CD4-positive, alpha-beta T cell (primary cell): ENCODE measurements at regions of chr1 and their contacts with region 1.

Region 1: DNA sequence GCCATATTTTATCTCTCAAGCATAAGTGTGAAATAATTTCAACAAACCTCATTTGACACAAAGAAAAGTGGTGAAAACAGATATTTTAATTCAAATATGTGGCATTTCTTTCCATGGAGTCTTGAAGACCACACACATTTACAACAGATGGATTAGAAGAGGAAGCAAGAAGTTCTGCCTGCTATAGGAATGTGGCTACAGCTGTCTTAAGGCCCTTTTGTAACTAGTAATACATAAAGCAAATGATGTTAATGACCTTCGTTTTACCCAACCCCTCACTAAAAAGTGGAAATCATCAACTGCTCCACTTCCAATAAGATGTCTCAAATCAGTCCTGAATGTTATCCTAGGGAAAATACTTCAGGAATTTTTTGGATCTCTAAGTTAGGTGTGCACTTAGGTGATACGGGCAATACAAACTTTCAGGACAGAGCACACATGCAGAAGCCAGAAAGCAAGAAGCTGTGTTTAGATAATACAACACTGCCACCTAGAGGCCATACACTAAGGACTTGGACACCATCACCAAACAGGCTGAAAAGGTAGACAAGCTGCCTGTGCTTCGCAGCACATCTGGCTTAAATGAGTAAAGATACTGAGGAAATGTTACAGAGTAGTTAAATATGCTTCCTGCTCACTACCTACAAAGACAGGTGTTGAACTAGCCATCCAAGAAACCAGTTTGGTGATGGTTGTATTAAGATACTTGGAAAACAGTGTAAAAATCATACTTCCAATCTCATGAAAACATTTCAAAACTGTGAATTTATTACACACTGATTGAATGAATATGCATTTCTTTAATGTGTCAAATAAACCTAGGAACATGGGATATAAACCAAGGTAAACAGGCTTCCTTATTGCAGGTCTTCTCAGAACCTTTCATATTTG is 24.4 kb downstream of the RRAGC start:
- DNase-seq: peak in 8 of 14 experiments; percentile 9 to 87 (median 46)
- ATAC-seq: peak; percentile 84
- H3K4me3 ChIP-seq: no peak overlapping the region
- H3K4me3 Mint-ChIP-seq: no peak overlapping the region
- H3K27ac ChIP-seq: no peak overlapping the region
- H3K27ac Mint-ChIP-seq: no peak overlapping the region
- H3K4me1 ChIP-seq: no peaks in the 10 kb centered on the region
- H3K4me1 Mint-ChIP-seq: peaks cover 7% of the 10 kb centered on the region
- H3K27me3 ChIP-seq: no peaks in the 10 kb centered on the region
- H3K27me3 Mint-ChIP-seq: peaks cover 8% of the 10 kb centered on the region
- CTCF ChIP-seq: peak; percentile 93

Region 2: GRCh38 chr1:37602750-37603694 is 1232.2 kb before region 1 on chr1:
- CTCF ChIA-PET with region 1: interaction called, 3 read pairs
- POLR2A ChIA-PET with region 1: no interaction called
- intact Hi-C with region 1: loop called (anchors 2 to 5 kb)
- DNase-seq: peak in 12 of 14 experiments; percentile 6 to 71 (median 26)
- ATAC-seq: peak; percentile 74
- H3K4me3 ChIP-seq: no peak overlapping the region
- H3K4me3 Mint-ChIP-seq: no peak overlapping the region
- H3K27ac ChIP-seq: no peak overlapping the region
- H3K27ac Mint-ChIP-seq: no peak overlapping the region
- H3K4me1 ChIP-seq: peaks cover 7% of the 10 kb centered on the region
- H3K4me1 Mint-ChIP-seq: no peaks in the 10 kb centered on the region
- H3K27me3 ChIP-seq: no peaks in the 10 kb centered on the region
- H3K27me3 Mint-ChIP-seq: peaks cover 11% of the 10 kb centered on the region
- CTCF ChIP-seq: peak; percentile 87

Region 3: DNA sequence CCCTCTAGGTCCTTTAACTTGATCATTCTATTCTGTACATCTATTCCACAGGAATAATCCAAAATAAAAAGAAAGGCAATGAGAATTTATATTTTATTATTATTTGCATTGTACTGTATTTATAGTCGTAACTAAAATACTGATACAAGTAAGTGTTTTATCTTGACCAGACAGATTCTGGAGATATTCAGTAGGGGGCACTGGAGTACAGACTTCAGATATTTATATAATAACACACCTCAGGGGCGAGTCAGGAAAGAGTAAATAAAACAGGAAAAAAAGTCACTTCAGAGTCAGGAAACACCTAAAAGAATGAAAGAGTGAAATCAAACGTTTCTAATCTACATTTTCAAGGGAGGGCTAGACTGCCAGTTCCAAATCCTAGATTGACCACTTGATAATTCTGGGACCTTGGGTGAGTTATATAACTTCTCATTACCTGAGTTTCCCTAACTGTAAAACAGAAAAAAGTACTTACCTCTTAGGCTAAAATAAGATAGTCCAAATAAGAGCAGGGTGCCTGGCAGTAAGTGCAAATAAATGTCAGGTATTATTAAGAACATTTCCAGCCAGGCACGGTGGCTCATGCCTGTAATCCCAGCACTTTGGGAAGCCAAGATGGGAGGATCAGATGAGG is 944.7 kb before region 1 on chr1:
- CTCF ChIA-PET with region 1: no interaction called
- POLR2A ChIA-PET with region 1: no interaction called
- intact Hi-C with region 1: loop called (anchors 1 to 10 kb)
- DNase-seq: peak in 4 of 14 experiments; percentile 8 to 62 (median 58)
- ATAC-seq: peak; percentile 61
- H3K4me3 ChIP-seq: no peak overlapping the region
- H3K4me3 Mint-ChIP-seq: no peak overlapping the region
- H3K27ac ChIP-seq: no peak overlapping the region
- H3K27ac Mint-ChIP-seq: peak overlapping the region; percentile 66
- H3K4me1 ChIP-seq: no peaks in the 10 kb centered on the region
- H3K4me1 Mint-ChIP-seq: peaks cover 5% of the 10 kb centered on the region
- H3K27me3 ChIP-seq: no peaks in the 10 kb centered on the region
- H3K27me3 Mint-ChIP-seq: no peaks in the 10 kb centered on the region
- CTCF ChIP-seq: peak; percentile 68

Region 4: GRCh38 chr1:38018864-38019343 is 816.3 kb before region 1 on chr1:
- CTCF ChIA-PET with region 1: no interaction called
- POLR2A ChIA-PET with region 1: no interaction called
- intact Hi-C with region 1: loop called in 1 of 2 experiments (anchors 2 kb)
- DNase-seq: peak in 3 of 14 experiments; percentile 46 to 60 (median 58)
- ATAC-seq: peak; percentile 76
- H3K4me3 ChIP-seq: no peak overlapping the region
- H3K4me3 Mint-ChIP-seq: no peak overlapping the region
- H3K27ac ChIP-seq: no peak overlapping the region
- H3K27ac Mint-ChIP-seq: no peak overlapping the region
- H3K4me1 ChIP-seq: peaks cover 10% of the 10 kb centered on the region
- H3K4me1 Mint-ChIP-seq: peaks cover 17% of the 10 kb centered on the region
- H3K27me3 ChIP-seq: no peaks in the 10 kb centered on the region
- H3K27me3 Mint-ChIP-seq: no peaks in the 10 kb centered on the region
- CTCF ChIP-seq: peak; percentile 59

Region 5: GRCh38 chr1:38026592-38027200 is 808.5 kb before region 1 on chr1:
- CTCF ChIA-PET with region 1: interaction called, 4 read pairs
- POLR2A ChIA-PET with region 1: no interaction called
- intact Hi-C with region 1: loop called (anchors 2 to 5 kb)
- DNase-seq: peak in 5 of 14 experiments; percentile 20 to 55 (median 50)
- ATAC-seq: no peak
- H3K4me3 ChIP-seq: no peak overlapping the region
- H3K4me3 Mint-ChIP-seq: no peak overlapping the region
- H3K27ac ChIP-seq: no peak overlapping the region
- H3K27ac Mint-ChIP-seq: no peak overlapping the region
- H3K4me1 ChIP-seq: peaks cover 42% of the 10 kb centered on the region
- H3K4me1 Mint-ChIP-seq: peaks cover 32% of the 10 kb centered on the region
- H3K27me3 ChIP-seq: no peaks in the 10 kb centered on the region
- H3K27me3 Mint-ChIP-seq: no peaks in the 10 kb centered on the region
- CTCF ChIP-seq: peak; percentile 19

Region 6: DNA sequence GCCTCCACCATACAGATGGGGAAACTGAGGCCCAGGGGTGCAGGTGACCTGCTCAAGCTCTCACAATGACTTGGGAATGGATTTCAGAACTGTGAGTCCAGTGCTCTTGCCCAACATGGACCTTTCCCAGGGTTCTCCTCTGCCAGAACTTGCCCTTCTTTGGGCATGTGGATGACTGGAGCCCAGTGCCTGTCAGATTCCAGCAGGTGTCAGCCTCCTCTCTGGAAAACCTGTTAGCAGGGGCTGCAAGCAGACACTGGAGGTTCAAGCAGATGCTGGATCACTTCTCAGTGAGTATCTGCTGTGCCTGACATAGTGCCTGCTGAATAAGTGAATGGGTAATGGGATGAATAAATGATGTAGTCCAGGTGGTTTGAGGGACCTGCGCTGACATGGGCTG is 474.4 kb before region 1 on chr1:
- CTCF ChIA-PET with region 1: no interaction called
- POLR2A ChIA-PET with region 1: no interaction called
- intact Hi-C with region 1: loop called in 1 of 2 experiments (anchors 5 kb)
- DNase-seq: peak in 1 of 14 experiments; percentile 3
- ATAC-seq: no peak
- H3K4me3 ChIP-seq: no peak overlapping the region
- H3K4me3 Mint-ChIP-seq: no peak overlapping the region
- H3K27ac ChIP-seq: no peak overlapping the region
- H3K27ac Mint-ChIP-seq: no peak overlapping the region
- H3K4me1 ChIP-seq: no peaks in the 10 kb centered on the region
- H3K4me1 Mint-ChIP-seq: no peaks in the 10 kb centered on the region
- H3K27me3 ChIP-seq: peaks cover 3 to 4% of the 10 kb centered on the region in 2 experiments
- H3K27me3 Mint-ChIP-seq: peaks cover 5% of the 10 kb centered on the region
- CTCF ChIP-seq: no peak

Region 7: DNA sequence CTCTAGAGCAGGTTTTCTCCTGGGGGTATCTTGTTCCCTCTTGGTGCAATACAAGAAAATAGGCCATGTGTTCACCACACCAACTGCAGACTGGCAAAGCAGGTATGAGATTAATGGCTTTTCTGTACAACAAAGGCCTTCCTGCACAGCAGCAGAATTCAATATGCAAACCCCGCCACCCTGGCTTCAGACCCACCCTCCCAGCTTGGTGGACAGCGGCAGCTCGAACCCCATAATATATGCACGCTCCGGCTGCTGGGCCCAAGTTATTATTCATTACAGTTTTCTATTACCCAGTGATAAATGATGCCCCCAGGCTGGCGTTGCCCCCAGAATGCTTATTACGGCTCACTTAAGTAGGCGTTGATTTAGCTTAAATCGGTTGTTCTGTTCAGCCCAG is 119.8 kb before region 1 on chr1:
- CTCF ChIA-PET with region 1: no interaction called
- POLR2A ChIA-PET with region 1: no interaction called
- intact Hi-C with region 1: no loop called
- DNase-seq: no peak
- ATAC-seq: no peak
- H3K4me3 ChIP-seq: no peak overlapping the region
- H3K4me3 Mint-ChIP-seq: no peak overlapping the region
- H3K27ac ChIP-seq: no peak overlapping the region
- H3K27ac Mint-ChIP-seq: no peak overlapping the region
- H3K4me1 ChIP-seq: no peaks in the 10 kb centered on the region
- H3K4me1 Mint-ChIP-seq: no peaks in the 10 kb centered on the region
- H3K27me3 ChIP-seq: peaks cover 0 to 2% of the 10 kb centered on the region in 2 experiments
- H3K27me3 Mint-ChIP-seq: peaks cover 20% of the 10 kb centered on the region
- CTCF ChIP-seq: no peak